ENCODE measurements at regions of chr13 and their contacts with region 1.

Region 1: DNA sequence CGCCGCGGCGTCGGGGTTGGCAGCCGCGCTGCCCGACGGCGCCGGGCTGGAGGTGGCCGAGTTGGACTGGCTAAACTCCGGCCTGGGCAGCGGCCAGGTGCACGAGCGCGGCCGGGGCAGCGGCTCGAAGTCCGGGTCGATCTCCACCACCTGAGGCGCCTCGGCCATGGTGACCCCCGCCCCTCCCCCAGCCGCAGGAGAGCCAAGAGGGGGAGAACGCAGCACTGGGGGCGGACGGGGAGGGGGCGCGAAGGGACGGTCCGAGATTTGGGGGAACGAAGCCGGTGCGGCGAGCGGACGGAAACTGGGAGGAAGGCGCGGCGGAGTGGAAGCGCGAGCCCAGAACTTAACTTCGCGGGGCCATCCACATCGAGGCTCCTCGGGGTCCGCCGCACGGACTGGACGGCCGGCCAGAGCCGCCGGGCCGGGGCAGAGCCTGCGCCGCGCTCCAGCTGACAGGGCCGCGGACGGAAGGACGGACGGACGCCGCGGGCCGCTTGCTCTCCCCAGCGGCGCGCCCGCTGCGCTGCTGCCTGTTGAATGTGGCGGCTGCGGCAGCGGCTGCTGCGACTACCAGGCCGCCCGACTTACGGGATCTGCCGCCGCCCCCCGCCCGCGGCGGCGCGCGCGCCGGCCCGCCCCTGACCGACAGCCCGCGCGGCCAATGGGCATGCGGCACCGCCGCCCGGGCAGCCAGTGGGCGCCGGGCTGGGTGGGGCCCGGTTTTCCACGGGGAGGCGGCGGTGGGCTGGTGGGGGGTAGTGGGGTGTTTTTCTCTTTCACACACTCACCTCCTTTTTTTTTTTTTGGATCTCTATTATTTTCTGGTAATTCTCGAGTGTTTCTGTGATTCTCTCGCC is at the start of gene FOXO1:
- DNase-seq: peak; percentile 88
- ATAC-seq: peak; percentile 76
- H3K4me3 Mint-ChIP-seq: peak within 1 kb of the TSS; percentile 90
- H3K27ac Mint-ChIP-seq: peak within 1 kb of the TSS; percentile 91
- H3K4me1 Mint-ChIP-seq: peaks cover 45% of the 10 kb centered on the region
- H3K27me3 Mint-ChIP-seq: no peaks in the 10 kb centered on the region
- total RNA-seq, gene FOXO1: 23.1 to 24.0 TPM

Region 2: DNA sequence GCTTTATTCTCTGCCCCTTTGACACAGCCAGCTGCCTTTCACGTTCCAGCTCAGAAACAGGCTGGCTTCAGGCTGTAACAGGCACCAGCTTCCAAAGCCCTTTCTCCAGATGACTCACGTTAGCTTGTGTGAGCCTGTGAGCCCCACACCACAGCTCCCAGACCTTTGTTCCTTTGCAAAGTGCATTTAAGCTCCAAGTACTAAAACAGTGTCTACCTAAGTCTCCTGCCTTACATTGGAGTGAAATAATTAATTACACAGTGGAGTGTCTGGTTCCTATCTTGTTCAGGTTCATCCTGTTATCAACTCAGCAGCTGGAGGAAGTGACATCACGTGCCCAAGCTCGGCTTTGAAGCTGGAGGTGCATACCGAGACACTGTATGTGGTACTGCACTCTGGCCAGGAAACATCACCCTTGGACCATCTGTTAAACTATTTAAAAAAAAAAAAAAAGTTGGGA is 475.6 kb before region 1 on chr13:
- CTCF ChIA-PET with region 1: interaction called, 10 read pairs
- POLR2A ChIA-PET with region 1: interaction called, 15 read pairs
- DNase-seq: peak; percentile 87
- ATAC-seq: peak; percentile 30
- H3K4me3 Mint-ChIP-seq: peak overlapping the region; percentile 40
- H3K27ac Mint-ChIP-seq: peak overlapping the region; percentile 98
- H3K4me1 Mint-ChIP-seq: peaks cover 64% of the 10 kb centered on the region
- H3K27me3 Mint-ChIP-seq: no peaks in the 10 kb centered on the region

Region 3: GRCh38 chr13:40600149-40600751 is 66.0 kb before region 1 on chr13:
- CTCF ChIA-PET with region 1: interaction called, 4 read pairs
- POLR2A ChIA-PET with region 1: interaction called, 24 read pairs
- DNase-seq: no peak
- ATAC-seq: no peak
- H3K4me3 Mint-ChIP-seq: peak overlapping the region; percentile 43
- H3K27ac Mint-ChIP-seq: peak overlapping the region; percentile 75
- H3K4me1 Mint-ChIP-seq: peaks cover 76% of the 10 kb centered on the region
- H3K27me3 Mint-ChIP-seq: no peaks in the 10 kb centered on the region

Region 4: GRCh38 chr13:40639221-40639681 is 27.0 kb before region 1 on chr13:
- CTCF ChIA-PET with region 1: interaction called, 3 read pairs
- POLR2A ChIA-PET with region 1: interaction called, 14 read pairs
- DNase-seq: no peak
- ATAC-seq: no peak
- H3K4me3 Mint-ChIP-seq: no peak overlapping the region
- H3K27ac Mint-ChIP-seq: no peak overlapping the region
- H3K4me1 Mint-ChIP-seq: peaks cover 75% of the 10 kb centered on the region
- H3K27me3 Mint-ChIP-seq: no peaks in the 10 kb centered on the region

Region 5: GRCh38 chr13:40653527-40654318 is 12.6 kb before region 1 on chr13:
- CTCF ChIA-PET with region 1: interaction called, 5 read pairs
- POLR2A ChIA-PET with region 1: interaction called, 11 read pairs
- DNase-seq: no peak
- ATAC-seq: peak; percentile 77
- H3K4me3 Mint-ChIP-seq: peak overlapping the region; percentile 49
- H3K27ac Mint-ChIP-seq: peak overlapping the region; percentile 71
- H3K4me1 Mint-ChIP-seq: peaks cover 84% of the 10 kb centered on the region
- H3K27me3 Mint-ChIP-seq: no peaks in the 10 kb centered on the region

Region 6: DNA sequence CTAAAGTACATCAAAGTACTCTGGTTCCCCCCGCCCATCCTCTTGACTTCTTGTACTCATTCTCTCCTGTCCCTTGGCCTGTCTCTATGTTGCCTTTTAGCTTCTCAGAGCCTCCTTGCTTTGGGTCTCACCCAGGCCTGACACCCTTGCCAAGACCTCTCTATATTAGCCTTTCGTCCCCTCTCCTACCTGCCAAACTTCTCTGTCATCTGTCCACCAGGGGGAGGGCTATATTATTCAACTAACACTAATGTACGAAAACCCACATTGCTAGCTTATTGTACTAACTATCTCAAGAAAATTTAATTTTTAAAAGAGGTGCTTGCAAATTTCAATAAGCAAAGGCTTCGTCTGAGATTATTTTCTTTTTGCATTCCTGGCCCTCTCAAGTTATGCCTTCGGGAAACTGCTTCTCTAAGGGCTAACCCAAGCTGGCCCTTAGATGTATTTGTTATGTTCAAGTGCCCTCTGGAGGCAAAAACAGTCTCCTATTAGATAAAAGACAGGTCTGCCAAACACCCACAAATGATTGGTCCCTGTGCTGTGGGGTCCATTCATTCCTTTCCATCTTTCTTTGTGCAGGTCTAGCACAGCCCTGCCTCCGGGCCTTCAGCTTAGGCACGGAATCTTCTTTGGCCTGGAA is 111.0 kb after region 1 on chr13:
- CTCF ChIA-PET with region 1: interaction called, 20 read pairs
- POLR2A ChIA-PET with region 1: interaction called, 3 read pairs
- DNase-seq: peak; percentile 68
- ATAC-seq: peak; percentile 73
- H3K4me3 Mint-ChIP-seq: peak overlapping the region; percentile 72
- H3K27ac Mint-ChIP-seq: peak overlapping the region; percentile 100
- H3K4me1 Mint-ChIP-seq: peaks cover 35% of the 10 kb centered on the region
- H3K27me3 Mint-ChIP-seq: no peaks in the 10 kb centered on the region

Region 7: GRCh38 chr13:40982772-40983171 is 316.5 kb after region 1 on chr13:
- CTCF ChIA-PET with region 1: no interaction called
- POLR2A ChIA-PET with region 1: no interaction called
- DNase-seq: peak; percentile 82
- ATAC-seq: peak; percentile 62
- H3K4me3 Mint-ChIP-seq: peak overlapping the region; percentile 94
- H3K27ac Mint-ChIP-seq: peak overlapping the region; percentile 93
- H3K4me1 Mint-ChIP-seq: peaks cover 53% of the 10 kb centered on the region
- H3K27me3 Mint-ChIP-seq: no peaks in the 10 kb centered on the region

Measured in activated CD8-positive, alpha-beta T cell treated with anti-CD3 and anti-CD28 coated beads, Interleukin-2, amount 10 ng/mL, durations not matched to agents 7 days and 5 days (primary cell).